ENCODE measurements at regions of chr18 and their contacts with region 1.

Region 1: DNA sequence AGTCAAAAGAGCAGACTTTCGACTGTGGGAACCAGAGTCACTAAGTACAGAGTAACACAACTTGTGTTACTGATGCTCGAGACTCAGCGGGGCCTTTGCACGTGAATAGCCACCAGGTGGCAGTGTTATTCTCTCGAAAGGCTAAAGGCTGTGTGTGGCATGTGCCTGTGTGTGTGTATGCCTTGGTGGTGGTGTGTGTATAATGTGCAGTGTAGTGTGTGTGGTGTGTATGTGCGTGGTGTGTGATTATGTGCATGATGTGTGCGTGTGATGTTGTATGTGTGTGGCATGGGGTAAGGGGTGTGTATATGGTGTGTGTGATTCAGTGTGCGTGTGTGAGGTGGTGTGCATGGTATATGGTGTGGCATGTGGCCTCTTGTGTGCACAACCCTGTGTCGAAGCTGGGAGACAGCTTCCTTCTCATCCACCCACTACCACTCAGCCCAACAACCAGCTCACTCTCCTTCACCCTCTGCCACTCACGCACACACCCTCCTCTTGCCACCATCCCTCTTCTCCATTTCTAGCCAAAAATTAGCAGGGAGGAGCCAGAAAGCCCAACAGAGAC is 83.0 kb upstream of the ZNF532 start:
- DNase-seq: peak; percentile 72
- CTCF ChIP-seq: peak; percentile 89

Region 2: DNA sequence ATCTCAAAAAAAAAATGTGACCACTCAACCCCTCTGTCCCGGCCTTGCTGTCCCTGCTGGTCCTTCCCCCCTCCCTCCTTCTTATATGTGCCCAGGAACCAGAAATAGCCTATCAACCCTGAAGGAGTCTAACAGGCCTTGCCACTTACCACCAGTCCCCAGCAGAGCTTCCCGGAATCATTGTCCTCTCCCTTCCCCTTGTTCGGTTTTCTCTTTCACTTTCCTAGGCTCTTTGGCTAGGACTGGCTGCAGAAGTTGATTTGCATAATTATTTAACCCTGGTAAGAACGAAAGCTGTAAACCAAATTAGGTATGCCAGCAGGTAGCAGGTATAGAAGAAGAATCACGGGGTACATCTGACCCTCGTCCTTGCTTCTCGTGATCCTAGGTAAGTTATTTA is 10.4 kb after region 1 on chr18:
- CTCF ChIA-PET with region 1: interaction called, 13 read pairs
- POLR2A ChIA-PET with region 1: no interaction called
- DNase-seq: peak; percentile 71
- CTCF ChIP-seq: no peak

Region 3: DNA sequence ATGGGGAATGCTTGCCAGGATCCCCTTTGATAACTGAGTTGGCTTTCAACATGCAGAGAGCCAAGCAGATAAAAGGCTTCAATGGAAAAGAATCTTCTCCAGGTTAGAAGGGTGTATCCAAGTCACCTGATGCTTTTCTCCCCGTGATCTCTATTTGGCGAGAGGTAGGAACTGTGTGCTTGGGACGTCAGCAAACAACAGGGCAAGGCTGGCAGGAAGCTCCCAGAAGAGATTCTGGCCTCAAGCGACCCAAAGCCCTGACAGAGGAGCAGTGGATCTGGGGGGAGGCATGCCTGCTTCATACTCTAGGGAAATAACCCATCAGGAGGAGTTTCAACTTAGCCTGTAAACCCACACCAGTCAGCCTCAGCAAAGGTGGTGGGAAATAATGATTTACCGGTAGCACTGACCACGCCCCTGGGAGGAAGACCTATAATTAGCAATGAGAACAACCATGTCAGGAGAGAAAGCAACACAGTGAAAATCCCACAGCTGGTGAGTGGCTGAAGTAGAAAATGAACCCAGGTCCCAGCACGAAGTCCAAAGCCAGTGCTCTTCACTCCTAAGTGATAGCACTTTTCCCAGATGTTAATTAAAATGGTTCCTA is 281.7 kb after region 1 on chr18:
- CTCF ChIA-PET with region 1: interaction called, 371 read pairs
- POLR2A ChIA-PET with region 1: no interaction called
- DNase-seq: peak; percentile 35
- CTCF ChIP-seq: no peak

Region 4: DNA sequence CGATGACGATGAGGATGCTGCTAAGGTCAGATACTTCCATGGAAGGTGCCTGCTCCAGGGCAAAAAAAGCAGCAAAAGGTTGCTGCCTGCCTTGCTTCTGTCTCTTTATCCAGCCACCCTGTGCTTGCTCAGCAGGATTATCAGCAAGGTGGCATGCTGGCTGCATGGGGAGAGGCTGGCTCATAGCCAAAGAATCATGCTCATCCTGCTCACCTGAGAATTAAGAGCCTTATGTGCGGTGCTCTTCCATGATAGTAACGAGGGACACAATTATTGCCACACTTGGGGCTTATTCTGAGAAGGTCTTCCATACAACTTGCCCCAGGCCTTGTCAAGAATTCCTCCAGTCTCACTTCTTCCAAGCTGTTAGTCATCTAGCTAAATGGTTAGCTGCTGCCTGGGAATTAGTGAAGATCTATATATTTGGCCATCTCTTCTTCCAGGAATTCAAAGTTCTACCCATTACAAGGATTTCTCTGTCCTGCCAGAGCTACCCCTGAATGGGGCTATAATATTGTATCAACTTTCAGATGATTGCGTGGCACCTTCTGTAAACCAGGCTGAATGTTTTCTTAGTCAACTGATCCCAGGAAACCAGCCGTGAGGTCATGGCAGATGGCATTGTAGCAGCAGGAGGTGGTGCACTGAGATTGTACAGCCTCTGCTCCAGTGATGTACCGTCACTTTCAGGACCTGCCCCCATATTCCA is 297.7 kb after region 1 on chr18:
- CTCF ChIA-PET with region 1: interaction called, 18 read pairs
- POLR2A ChIA-PET with region 1: no interaction called
- DNase-seq: no peak
- CTCF ChIP-seq: no peak

Region 5: GRCh38 chr18:59085797-59086196 is 304.1 kb after region 1 on chr18:
- CTCF ChIA-PET with region 1: interaction called, 18 read pairs
- POLR2A ChIA-PET with region 1: no interaction called
- DNase-seq: no peak
- CTCF ChIP-seq: no peak